Left ventricle myocardium inferior (tissue), 1 donor: ENCODE measurements at regions of chr19 and their contacts with region 1.

Region 1: DNA sequence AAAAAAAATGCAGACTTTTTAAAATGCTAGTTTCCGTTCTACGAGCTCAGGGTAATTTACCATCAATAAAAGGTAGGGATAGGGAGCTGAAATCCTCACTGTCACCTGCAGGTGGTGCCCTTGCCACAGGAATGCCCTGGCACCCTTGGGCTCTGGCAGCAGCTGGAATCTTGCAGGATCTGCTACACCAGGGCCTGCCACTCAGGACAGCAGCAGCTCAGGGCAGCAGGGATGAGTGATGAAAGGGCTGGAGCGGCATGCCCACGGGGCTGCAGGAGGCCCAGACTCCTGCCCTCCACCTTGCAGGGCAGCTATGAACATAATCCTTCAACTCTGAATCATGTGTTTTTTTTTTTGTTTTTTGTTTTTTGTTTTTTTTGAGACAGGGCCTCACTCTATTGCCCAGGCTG is 54.0 kb downstream of the GNG7 start:
- DNase-seq: peak; percentile 69
- H3K4me3 ChIP-seq: no peak overlapping the region
- H3K27ac ChIP-seq: no peak overlapping the region
- H3K4me1 ChIP-seq: peaks cover 2% of the 10 kb centered on the region
- H3K27me3 ChIP-seq: peaks cover 4% of the 10 kb centered on the region
- CTCF ChIP-seq: peak; percentile 80

Region 2: GRCh38 chr19:2747349-2747748 is 98.8 kb after region 1 on chr19:
- intact Hi-C with region 1: loop called (anchors 5 kb)
- DNase-seq: no peak
- H3K4me3 ChIP-seq: no peak overlapping the region
- H3K27ac ChIP-seq: no peak overlapping the region
- H3K4me1 ChIP-seq: peaks cover 3% of the 10 kb centered on the region
- H3K27me3 ChIP-seq: no peaks in the 10 kb centered on the region
- CTCF ChIP-seq: no peak

Region 3: GRCh38 chr19:2869618-2870017 is 221.1 kb after region 1 on chr19:
- intact Hi-C with region 1: loop called (anchors 10 kb)
- DNase-seq: no peak
- H3K4me3 ChIP-seq: no peak overlapping the region
- H3K27ac ChIP-seq: no peak overlapping the region
- H3K4me1 ChIP-seq: no peaks in the 10 kb centered on the region
- H3K27me3 ChIP-seq: no peaks in the 10 kb centered on the region
- CTCF ChIP-seq: no peak